ENCODE measurements at regions of chr4 and their contacts with region 1.

Region 1: GRCh38 chr4:158809611-158810486 is 41.0 kb downstream of the FNIP2 start:
- DNase-seq: peak; percentile 49 to 52
- H3K4me3 ChIP-seq: no peak overlapping the region
- H3K4me3 Mint-ChIP-seq: peak overlapping the region; percentile 30
- H3K27ac Mint-ChIP-seq: peak overlapping the region; percentile 55
- H3K4me1 ChIP-seq: peaks cover 36% of the 10 kb centered on the region
- H3K4me1 Mint-ChIP-seq: peaks cover 48% of the 10 kb centered on the region
- H3K27me3 ChIP-seq: no peaks in the 10 kb centered on the region
- H3K27me3 Mint-ChIP-seq: peaks cover 2% of the 10 kb centered on the region
- CTCF ChIP-seq: no peak

Region 2: DNA sequence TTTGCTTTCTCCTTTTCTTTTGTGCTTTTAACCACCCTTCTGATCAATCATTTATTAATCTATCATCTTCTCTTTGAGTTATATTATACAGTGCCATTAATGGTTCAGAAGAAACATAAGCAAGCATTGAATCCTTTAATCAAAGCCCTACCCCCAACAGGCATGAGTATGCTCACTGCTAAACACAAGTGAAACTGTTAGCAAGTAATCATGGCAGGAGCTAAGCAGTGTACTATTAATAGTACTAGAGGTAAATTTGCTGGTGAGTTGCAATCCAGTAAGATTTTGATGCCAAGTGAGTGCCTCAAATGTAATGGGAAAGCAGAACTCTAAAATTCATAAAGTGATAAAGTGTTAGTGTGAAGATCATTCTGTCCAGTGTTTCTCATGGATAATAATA is 16.2 kb after region 1 on chr4:
- CTCF ChIA-PET with region 1: no interaction called
- POLR2A ChIA-PET with region 1: no interaction called
- intact Hi-C with region 1: loop called (anchors 1 kb)
- DNase-seq: no peak
- H3K4me3 ChIP-seq: no peak overlapping the region
- H3K4me3 Mint-ChIP-seq: peak overlapping the region; percentile 37
- H3K27ac Mint-ChIP-seq: peak overlapping the region; percentile 80
- H3K4me1 ChIP-seq: peaks cover 45% of the 10 kb centered on the region
- H3K4me1 Mint-ChIP-seq: peaks cover 54% of the 10 kb centered on the region
- H3K27me3 ChIP-seq: no peaks in the 10 kb centered on the region
- H3K27me3 Mint-ChIP-seq: no peaks in the 10 kb centered on the region
- CTCF ChIP-seq: no peak

Region 3: GRCh38 chr4:158850800-158851644 is 41.2 kb after region 1 on chr4:
- CTCF ChIA-PET with region 1: no interaction called
- POLR2A ChIA-PET with region 1: no interaction called
- intact Hi-C with region 1: loop called (anchors 2 kb)
- DNase-seq: peak in 1 of 2 experiments; percentile 30
- H3K4me3 ChIP-seq: no peak overlapping the region
- H3K4me3 Mint-ChIP-seq: no peak overlapping the region
- H3K27ac Mint-ChIP-seq: no peak overlapping the region
- H3K4me1 ChIP-seq: no peaks in the 10 kb centered on the region
- H3K4me1 Mint-ChIP-seq: no peaks in the 10 kb centered on the region
- H3K27me3 ChIP-seq: no peaks in the 10 kb centered on the region
- H3K27me3 Mint-ChIP-seq: no peaks in the 10 kb centered on the region
- CTCF ChIP-seq: peak; percentile 52 to 55

Measured in Caco-2 (cell line).